Heart right ventricle (tissue), 16 donors: ENCODE measurements at regions of chr18 and their contacts with region 1.

Region 1: GRCh38 chr18:56076723-56077122 is 488.7 kb upstream of the TCF4 start:
- DNase-seq: no peak
- ATAC-seq: no peak
- H3K4me3 ChIP-seq: no peak overlapping the region
- H3K27ac ChIP-seq: no peak overlapping the region
- H3K4me1 ChIP-seq: peaks cover 0 to 16% (median 7%) of the 10 kb centered on the region in 9 donors
- H3K27me3 ChIP-seq: no peaks in the 10 kb centered on the region
- CTCF ChIP-seq: no peak

Region 2: DNA sequence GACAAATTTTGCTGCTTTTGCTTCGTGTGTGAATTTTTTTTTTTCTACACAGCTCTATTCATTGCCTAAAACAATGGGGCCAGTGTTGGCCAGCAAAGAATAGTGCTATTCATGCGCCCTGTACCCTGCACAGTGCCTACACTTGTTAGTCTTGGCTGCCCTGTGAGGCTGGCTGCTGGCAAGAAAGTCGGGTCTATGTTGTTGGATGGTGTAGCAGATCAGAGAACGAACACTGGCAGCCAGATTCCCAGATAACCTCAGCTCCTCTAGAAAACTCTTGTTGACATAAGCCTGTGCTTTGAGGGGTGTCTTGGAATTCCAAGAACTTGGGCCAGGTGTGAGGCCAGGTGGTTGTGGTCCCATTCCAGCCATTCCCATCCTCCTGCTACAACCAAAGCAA is 33.1 kb before region 1 on chr18:
- intact Hi-C with region 1: loop called in 1 of 10 experiments (anchors 2 kb)
- DNase-seq: no peak
- ATAC-seq: peak in 4 of 8 donors; percentile 58 to 75 (median 70)
- H3K4me3 ChIP-seq: no peak overlapping the region
- H3K27ac ChIP-seq: no peak overlapping the region
- H3K4me1 ChIP-seq: peaks cover 0 to 5% (median 0%) of the 10 kb centered on the region in 9 donors
- H3K27me3 ChIP-seq: no peaks in the 10 kb centered on the region
- CTCF ChIP-seq: no peak

Region 3: DNA sequence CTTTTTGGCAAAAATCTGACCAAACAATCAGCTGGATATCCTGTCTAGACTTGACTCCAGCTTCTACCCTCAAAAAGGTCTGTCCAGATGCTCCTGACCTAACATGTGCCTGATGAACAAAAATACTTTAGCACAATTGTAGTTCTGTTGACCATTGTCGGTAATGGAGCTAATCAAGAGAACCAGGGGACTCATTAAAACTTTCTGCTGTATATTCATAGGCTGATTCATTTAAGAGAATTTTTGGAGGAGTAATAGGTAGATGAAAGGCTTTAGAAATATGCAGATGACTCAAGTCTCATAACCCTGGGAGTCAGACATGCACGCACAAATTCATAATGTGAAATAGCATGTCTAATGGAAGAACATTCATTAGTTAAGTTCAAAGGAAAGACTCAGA is 47.5 kb after region 1 on chr18:
- intact Hi-C with region 1: no loop called
- DNase-seq: no peak
- ATAC-seq: no peak
- H3K4me3 ChIP-seq: no peak overlapping the region
- H3K27ac ChIP-seq: no peak overlapping the region
- H3K4me1 ChIP-seq: peaks cover 0 to 17% (median 4%) of the 10 kb centered on the region in 9 donors
- H3K27me3 ChIP-seq: no peaks in the 10 kb centered on the region
- CTCF ChIP-seq: no peak